Psoas muscle (tissue), 8 donors: ENCODE measurements at regions of chr5 and their contacts with region 1.

Region 1: GRCh38 chr5:109688971-109689739 is 572 bp upstream of the MAN2A1 start:
- DNase-seq: peak; percentile 88 to 93
- ATAC-seq: peak; percentile 86 to 94 (median 92)
- H3K4me3 ChIP-seq: peak overlapping the region; percentile 96
- H3K27ac ChIP-seq: peak overlapping the region; percentile 95
- H3K4me1 ChIP-seq: peaks cover 28% of the 10 kb centered on the region
- H3K27me3 ChIP-seq: no peaks in the 10 kb centered on the region
- CTCF ChIP-seq: peak; percentile 11

Region 2: GRCh38 chr5:109329333-109330237 is 359.6 kb before region 1 on chr5:
- intact Hi-C with region 1: no loop called
- DNase-seq: no peak
- ATAC-seq: peak; percentile 59 to 78 (median 72)
- H3K4me3 ChIP-seq: no peak overlapping the region
- H3K27ac ChIP-seq: no peak overlapping the region
- H3K4me1 ChIP-seq: no peaks in the 10 kb centered on the region
- H3K27me3 ChIP-seq: no peaks in the 10 kb centered on the region
- CTCF ChIP-seq: no peak

Region 3: DNA sequence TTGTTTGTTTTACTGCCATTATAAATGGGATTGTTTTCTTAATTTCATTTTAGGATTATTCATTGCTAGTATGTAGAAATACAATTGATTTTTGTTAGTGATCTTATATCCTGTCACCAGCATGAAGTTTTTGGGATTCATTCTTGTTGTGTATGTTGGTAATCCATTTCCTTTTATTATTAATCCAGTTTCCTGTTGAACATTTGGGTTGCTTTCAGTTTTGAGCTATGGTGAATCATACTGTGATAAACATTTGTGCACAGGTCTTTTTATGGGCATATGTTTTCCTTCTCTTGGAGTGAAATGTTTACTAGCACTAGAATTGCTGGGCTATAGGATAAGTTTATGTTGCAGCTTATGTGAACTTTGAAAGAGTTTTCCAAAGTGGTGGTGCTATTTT is 70.2 kb after region 1 on chr5:
- intact Hi-C with region 1: loop called in 1 of 2 experiments (anchors 10 kb)
- DNase-seq: no peak
- ATAC-seq: no peak
- H3K4me3 ChIP-seq: no peak overlapping the region
- H3K27ac ChIP-seq: peak overlapping the region; percentile 18
- H3K4me1 ChIP-seq: peaks cover 27% of the 10 kb centered on the region
- H3K27me3 ChIP-seq: no peaks in the 10 kb centered on the region
- CTCF ChIP-seq: no peak

Region 4: DNA sequence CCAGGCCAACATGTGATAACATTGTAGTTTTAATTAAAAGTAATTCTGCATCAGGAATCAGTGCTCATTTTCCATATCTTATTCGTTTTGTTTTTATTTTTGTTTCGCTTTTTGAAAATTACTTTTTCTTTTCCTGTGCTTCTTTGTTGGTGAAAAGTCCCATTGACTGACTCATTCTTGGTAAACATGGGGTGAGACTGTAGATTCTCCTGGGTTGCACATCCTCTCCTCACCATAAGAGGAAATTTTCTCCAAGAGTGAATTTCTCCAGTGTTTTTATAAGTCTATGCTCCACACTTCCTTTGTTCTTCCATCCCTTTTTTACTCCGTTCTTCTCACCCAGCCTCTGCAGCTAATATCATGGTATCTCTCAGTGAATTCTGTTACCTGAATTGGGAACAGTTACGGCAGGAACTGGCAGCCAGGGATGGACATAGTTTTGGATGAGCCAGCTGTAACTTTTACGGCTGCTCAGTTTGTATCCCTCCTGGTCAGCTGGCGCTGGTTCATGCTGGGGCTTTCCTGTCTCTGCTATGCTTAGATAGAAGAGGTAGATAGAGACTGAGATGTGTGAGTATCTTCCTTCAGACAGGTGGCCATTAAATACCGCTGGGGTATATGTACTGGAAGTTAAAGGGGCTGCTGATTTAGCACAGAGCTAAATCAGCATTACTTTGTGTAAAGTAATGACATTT is 80.6 kb after region 1 on chr5:
- intact Hi-C with region 1: loop called in 1 of 2 experiments (anchors 5 kb)
- DNase-seq: peak in 1 of 2 donors; percentile 53
- ATAC-seq: peak in 3 of 4 donors; percentile 34 to 47 (median 38)
- H3K4me3 ChIP-seq: no peak overlapping the region
- H3K27ac ChIP-seq: peak overlapping the region; percentile 1
- H3K4me1 ChIP-seq: peaks cover 32% of the 10 kb centered on the region
- H3K27me3 ChIP-seq: no peaks in the 10 kb centered on the region
- CTCF ChIP-seq: no peak

Region 5: DNA sequence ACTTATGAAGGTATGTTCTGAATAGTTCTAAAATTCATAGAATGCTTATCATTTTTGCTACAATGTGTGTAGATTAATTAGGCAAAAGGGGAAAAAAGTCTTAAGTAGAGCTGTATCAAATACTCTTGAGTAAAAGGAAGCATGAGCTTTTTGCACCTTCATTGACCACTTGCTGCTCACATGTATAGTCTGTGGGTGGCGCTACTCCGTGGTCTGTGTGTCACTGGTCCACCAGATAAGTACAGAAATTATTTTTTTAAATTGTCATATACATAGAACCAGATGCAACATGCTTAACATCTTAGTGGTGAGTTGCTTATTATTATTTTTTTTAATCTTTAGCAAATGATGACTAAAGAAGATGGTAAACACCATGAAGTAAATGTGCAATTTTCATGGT is 130.7 kb after region 1 on chr5:
- intact Hi-C with region 1: no loop called
- DNase-seq: no peak
- ATAC-seq: no peak
- H3K4me3 ChIP-seq: no peak overlapping the region
- H3K27ac ChIP-seq: no peak overlapping the region
- H3K4me1 ChIP-seq: no peaks in the 10 kb centered on the region
- H3K27me3 ChIP-seq: no peaks in the 10 kb centered on the region
- CTCF ChIP-seq: no peak

Region 6: DNA sequence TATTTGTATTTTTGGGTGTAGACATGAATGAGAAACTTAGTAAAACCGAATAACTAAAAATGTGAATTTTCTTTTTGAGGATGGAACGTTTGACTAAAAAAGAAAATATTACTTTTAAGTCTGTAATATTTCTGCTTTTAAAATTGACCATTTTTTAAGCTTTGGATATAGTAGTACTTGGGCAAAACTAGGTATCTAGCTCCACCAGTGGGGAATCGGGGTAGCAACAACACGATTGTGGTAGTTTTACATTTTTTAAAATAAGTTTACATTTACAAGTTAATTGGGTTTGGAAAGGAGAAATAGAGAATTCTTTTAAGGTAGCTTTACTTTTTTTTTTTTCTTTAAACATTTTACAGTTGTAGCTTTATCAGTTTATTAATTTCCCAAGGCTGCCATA is 155.0 kb after region 1 on chr5:
- intact Hi-C with region 1: loop called (anchors 5 to 10 kb)
- DNase-seq: no peak
- ATAC-seq: no peak
- H3K4me3 ChIP-seq: no peak overlapping the region
- H3K27ac ChIP-seq: no peak overlapping the region
- H3K4me1 ChIP-seq: no peaks in the 10 kb centered on the region
- H3K27me3 ChIP-seq: no peaks in the 10 kb centered on the region
- CTCF ChIP-seq: peak; percentile 24